HepG2 (cell line): ENCODE measurements at regions of chr4 and their contacts with region 1.

Region 1: DNA sequence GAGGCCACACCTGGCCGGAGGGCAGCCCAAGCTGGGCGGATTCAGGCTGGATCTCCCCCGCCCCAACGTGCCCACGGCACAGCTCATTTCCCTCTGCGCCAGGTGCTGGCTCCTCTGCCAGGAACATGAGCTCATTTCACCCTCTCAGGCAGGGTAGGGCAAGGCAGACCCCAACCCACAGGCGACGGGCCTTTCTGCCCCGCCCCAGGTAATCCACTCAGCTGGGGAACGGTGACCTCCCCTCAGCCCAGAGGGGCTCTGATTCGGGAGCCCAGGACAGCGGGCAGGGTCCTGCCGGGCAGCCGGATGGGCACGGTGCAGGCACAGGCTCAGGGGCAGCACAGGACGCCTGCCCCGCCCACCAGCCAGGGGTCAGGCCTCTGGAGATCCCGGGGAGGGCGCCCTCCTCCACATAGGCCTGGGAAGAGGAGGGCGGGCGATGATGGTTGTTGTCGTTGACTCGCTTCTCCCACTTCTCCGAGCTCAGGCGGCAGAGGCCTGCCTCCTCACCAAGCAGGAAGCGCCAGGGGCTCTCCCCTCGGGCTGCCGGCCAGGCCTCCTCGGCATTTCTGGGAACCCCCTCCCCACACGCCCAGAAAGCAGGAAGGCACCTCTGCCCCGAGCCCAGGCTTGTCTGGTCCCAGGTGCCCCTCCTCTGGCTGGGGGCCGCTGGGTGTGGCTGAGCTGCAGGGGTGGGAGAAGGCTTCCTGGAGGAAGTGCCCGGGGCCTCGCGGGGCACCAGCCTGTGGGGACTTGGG is 31.1 kb downstream of the TACC3 start:
- DNase-seq: peak; percentile 69
- ATAC-seq: peak; percentile 60
- H3K4me3 ChIP-seq: peak overlapping the region; percentile 45 to 73 (median 56)
- H3K27ac ChIP-seq: peak overlapping the region; percentile 12
- H3K4me1 ChIP-seq: peaks cover 90% of the 10 kb centered on the region
- H3K27me3 ChIP-seq: no peaks in the 10 kb centered on the region; a peak in 1 of 5 replicates
- CTCF ChIP-seq: peak; percentile 68
- EP300 ChIP-seq: no peak
- POLR2A ChIP-seq: no peak
- RAD21 ChIP-seq: no peak

Region 2: GRCh38 chr4:705278-706082 is 1047.0 kb before region 1 on chr4 and contains the start of gene PCGF3:
- CTCF ChIA-PET with region 1: no interaction called
- POLR2A ChIA-PET with region 1: no interaction called
- in situ Hi-C with region 1: no loop called
- intact Hi-C with region 1: no loop called
- DNase-seq: peak; percentile 83
- ATAC-seq: peak; percentile 89
- H3K4me3 ChIP-seq: peak within 1 kb of the TSS; percentile 89 to 93 (median 92)
- H3K27ac ChIP-seq: peak within 1 kb of the TSS; percentile 75
- H3K4me1 ChIP-seq: peaks cover 58% of the 10 kb centered on the region
- H3K27me3 ChIP-seq: peaks cover 3 to 12% of the 10 kb centered on the region in 2 experiments; a peak in 2 of 5 replicates
- CTCF ChIP-seq: peak; percentile 7; the same call in 1 of the 2 replicates
- EP300 ChIP-seq: no peak
- POLR2A ChIP-seq: peak in 1 of 2 experiments; percentile 34; a peak in 1 of 4 replicates
- RAD21 ChIP-seq: peak; percentile 19; the same call in 1 of the 2 replicates
- total RNA-seq, gene PCGF3: 24.2 and 28.6 TPM in 2 replicates

Region 3: DNA sequence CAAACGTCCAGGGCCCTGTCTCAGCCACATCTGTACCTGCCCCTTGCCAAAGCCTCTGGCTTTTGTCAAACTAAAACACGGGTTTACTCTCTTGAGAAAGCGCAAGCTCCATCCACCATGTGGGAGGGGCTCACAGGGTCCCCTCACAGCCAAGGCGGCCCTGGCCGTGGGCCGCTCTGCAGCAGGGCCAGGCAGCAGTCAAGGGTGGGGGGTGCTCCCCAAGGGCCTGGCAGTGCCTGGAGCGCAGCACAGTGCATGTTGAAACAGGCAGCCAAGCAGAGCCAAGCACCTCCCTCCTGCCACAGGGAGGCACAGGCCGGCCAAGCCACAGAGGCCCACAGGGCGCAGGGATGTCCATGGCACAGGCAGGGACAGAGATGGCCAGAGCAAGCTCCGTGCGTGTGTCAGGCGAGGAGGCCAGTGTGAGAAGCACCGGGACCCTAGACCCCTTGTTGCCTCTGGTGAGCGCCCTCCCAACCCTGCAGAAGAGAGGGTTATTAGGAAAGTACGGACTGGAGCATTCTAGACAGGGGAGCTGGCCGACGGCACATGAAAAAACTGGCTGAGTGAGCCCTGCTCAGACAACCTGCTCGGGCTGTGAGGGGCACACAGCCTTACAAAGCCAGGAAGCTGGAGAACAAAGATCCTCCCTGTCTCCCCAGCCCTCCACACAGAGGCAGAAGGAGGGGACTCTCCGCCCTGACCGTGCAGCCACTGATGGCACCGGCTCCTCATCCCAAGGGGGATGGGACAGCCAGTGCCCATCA is 107.4 kb before region 1 on chr4:
- CTCF ChIA-PET with region 1: no interaction called
- POLR2A ChIA-PET with region 1: no interaction called
- in situ Hi-C with region 1: no loop called
- intact Hi-C with region 1: no loop called
- DNase-seq: no peak
- ATAC-seq: peak; percentile 69
- H3K4me3 ChIP-seq: peak overlapping the region in 1 of 3 experiments; percentile 34; a peak in 1 of 6 replicates
- H3K27ac ChIP-seq: no peak overlapping the region
- H3K4me1 ChIP-seq: no peaks in the 10 kb centered on the region
- H3K27me3 ChIP-seq: peaks cover 0 to 5% of the 10 kb centered on the region in 2 experiments; a peak in 2 of 5 replicates
- CTCF ChIP-seq: no peak
- EP300 ChIP-seq: no peak
- POLR2A ChIP-seq: no peak
- RAD21 ChIP-seq: no peak

Region 4: GRCh38 chr4:1655081-1655480 is 97.4 kb before region 1 on chr4:
- CTCF ChIA-PET with region 1: no interaction called
- POLR2A ChIA-PET with region 1: no interaction called
- in situ Hi-C with region 1: no loop called
- intact Hi-C with region 1: no loop called
- DNase-seq: no peak
- ATAC-seq: no peak
- H3K4me3 ChIP-seq: no peak overlapping the region
- H3K27ac ChIP-seq: no peak overlapping the region
- H3K4me1 ChIP-seq: no peaks in the 10 kb centered on the region
- H3K27me3 ChIP-seq: no peaks in the 10 kb centered on the region
- CTCF ChIP-seq: no peak
- EP300 ChIP-seq: no peak
- POLR2A ChIP-seq: no peak
- RAD21 ChIP-seq: no peak

Region 5: GRCh38 chr4:1695913-1696312 is 56.5 kb before region 1 on chr4:
- CTCF ChIA-PET with region 1: no interaction called
- POLR2A ChIA-PET with region 1: no interaction called
- in situ Hi-C with region 1: no loop called
- intact Hi-C with region 1: no loop called
- DNase-seq: no peak
- ATAC-seq: no peak
- H3K4me3 ChIP-seq: no peak overlapping the region
- H3K27ac ChIP-seq: no peak overlapping the region
- H3K4me1 ChIP-seq: no peaks in the 10 kb centered on the region
- H3K27me3 ChIP-seq: no peaks in the 10 kb centered on the region
- CTCF ChIP-seq: no peak
- EP300 ChIP-seq: no peak
- POLR2A ChIP-seq: no peak
- RAD21 ChIP-seq: no peak

Region 6: DNA sequence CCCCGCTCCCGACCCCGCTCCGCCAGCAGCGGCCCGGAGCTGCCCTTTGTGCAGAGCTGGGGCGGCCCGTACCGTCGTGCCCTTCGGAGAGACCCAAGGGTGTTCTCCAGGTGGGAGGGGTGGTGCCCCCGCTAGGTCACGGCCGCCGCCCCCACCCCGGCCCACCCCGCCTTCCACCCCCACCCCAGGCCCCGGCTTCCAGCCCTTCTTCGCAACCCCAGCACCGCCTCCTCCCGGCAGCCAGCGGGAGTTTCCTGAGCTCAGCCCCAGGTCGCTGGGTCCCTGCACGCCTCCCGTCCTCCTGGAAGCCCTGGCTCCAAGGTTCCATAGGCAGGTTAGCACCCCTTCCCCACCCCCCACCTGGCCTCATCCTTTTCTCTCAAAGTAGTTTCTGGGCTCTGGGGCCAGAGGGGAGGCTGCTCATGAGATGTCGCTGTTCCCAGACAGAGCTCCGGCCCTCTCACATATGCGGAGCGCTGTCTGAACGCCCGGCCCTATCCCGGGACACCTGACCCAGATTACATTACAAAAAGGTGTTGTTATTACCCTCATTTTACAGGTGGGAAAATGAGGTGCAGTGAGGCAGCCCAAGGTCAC is 15.4 kb after region 1 on chr4:
- CTCF ChIA-PET with region 1: interaction called, 6 read pairs
- POLR2A ChIA-PET with region 1: interaction called, 70 read pairs
- in situ Hi-C with region 1: no loop called
- intact Hi-C with region 1: loop called (anchors 2 kb)
- DNase-seq: peak; percentile 76
- ATAC-seq: peak; percentile 20
- H3K4me3 ChIP-seq: peak overlapping the region; percentile 51 to 67 (median 59)
- H3K27ac ChIP-seq: peak overlapping the region; percentile 83
- H3K4me1 ChIP-seq: peaks cover 83% of the 10 kb centered on the region
- H3K27me3 ChIP-seq: no peaks in the 10 kb centered on the region
- CTCF ChIP-seq: peak; percentile 71
- EP300 ChIP-seq: no peak
- POLR2A ChIP-seq: no peak
- RAD21 ChIP-seq: no peak; the same call in 1 of the 2 replicates

Region 7: DNA sequence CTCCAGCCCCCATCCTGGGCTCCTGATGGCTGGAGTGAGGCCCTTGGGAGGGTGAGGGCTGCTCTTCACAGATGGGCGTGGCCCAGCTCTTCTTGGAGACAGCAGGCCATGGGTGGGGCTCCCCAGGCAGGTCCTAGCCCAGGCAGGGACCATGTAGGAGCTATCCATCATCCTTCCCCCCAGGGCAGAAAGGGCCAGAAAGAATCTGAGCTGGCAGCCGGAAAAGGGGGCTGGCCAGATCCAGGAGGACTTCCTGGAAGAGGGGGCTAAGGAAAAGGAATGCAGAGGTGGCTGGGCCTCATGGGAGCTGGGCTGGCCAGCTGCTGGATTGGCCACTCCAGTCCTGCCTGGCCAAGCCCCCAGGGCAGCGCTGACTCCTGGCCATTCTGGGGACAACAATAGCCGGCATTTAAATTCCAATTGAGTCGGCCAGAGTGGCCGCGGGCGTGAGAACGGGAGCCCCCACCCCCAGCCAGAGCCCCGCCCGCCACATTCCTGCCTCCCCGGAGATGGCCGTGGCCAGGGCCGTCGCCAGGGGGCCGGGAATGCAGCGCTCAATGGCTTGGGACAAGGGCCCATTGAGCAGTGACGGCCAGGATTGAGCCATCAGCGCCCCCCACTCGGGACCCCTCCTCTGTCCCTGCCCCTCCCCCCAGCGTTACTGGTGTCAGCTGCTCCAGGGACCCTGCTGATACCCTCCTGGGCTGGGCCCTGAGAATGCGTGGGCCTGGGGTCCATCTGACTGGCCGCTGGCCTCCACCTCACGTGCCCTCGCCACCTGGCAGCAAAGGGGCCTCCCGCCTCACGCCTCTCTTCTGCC is 25.6 kb after region 1 on chr4:
- CTCF ChIA-PET with region 1: no interaction called
- POLR2A ChIA-PET with region 1: interaction called, 1,258 read pairs
- in situ Hi-C with region 1: no loop called
- intact Hi-C with region 1: loop called (anchors 2 kb)
- DNase-seq: peak; percentile 81
- ATAC-seq: peak; percentile 39
- H3K4me3 ChIP-seq: peak overlapping the region; percentile 36 to 67 (median 44); a peak in 5 of 6 replicates
- H3K27ac ChIP-seq: peak overlapping the region; percentile 86
- H3K4me1 ChIP-seq: peaks cover 97% of the 10 kb centered on the region
- H3K27me3 ChIP-seq: no peaks in the 10 kb centered on the region
- CTCF ChIP-seq: peak; percentile 67
- EP300 ChIP-seq: peak in 1 of 2 experiments; percentile 35; a peak in 1 of 4 replicates
- POLR2A ChIP-seq: no peak
- RAD21 ChIP-seq: no peak

Region 8: GRCh38 chr4:1784789-1785591 is 32.5 kb after region 1 on chr4:
- CTCF ChIA-PET with region 1: no interaction called
- POLR2A ChIA-PET with region 1: interaction called, 1,258 read pairs
- in situ Hi-C with region 1: no loop called
- intact Hi-C with region 1: no loop called
- DNase-seq: peak; percentile 79
- ATAC-seq: peak; percentile 76
- H3K4me3 ChIP-seq: peak overlapping the region; percentile 29 to 62 (median 29); a peak in 5 of 6 replicates
- H3K27ac ChIP-seq: peak overlapping the region; percentile 69
- H3K4me1 ChIP-seq: peaks cover 96% of the 10 kb centered on the region
- H3K27me3 ChIP-seq: peaks cover 2% of the 10 kb centered on the region in 2 experiments; a peak in 3 of 5 replicates
- CTCF ChIP-seq: no peak
- EP300 ChIP-seq: peak in 1 of 2 experiments; percentile 85; a peak in 1 of 4 replicates
- POLR2A ChIP-seq: no peak
- RAD21 ChIP-seq: no peak

Region 9: DNA sequence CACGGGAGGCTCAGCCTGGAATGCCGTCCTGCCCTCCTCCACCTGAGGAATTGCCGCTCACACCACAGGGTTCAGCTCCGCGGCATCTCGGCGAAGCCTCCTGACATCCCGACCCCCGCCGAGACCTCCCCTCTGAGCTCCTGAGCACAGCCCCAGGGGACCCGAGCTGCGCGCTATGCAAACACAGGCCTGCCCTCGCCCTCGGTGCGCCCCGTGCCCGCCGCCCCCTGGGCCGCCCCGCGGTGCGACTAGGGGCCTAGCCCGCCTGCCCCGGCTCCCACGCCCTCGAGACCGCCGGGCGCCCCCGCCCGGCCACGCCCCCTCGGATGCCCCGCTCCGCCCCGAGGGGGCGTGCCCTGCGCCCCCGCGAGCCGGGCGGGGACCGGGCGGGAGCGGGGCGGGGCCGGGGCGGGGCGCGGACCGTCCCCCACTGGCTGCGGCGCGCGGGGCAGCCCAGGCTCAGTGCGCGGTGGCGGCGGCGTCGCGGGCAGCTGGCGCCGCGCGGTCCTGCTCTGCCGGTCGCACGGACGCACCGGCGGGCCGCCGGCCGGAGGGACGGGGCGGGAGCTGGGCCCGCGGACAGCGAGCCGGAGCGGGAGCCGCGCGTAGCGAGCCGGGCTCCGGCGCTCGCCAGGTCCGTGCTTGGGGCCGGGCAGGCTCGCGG is 40.5 kb after region 1 on chr4 and contains the start of gene FGFR3:
- CTCF ChIA-PET with region 1: no interaction called
- POLR2A ChIA-PET with region 1: interaction called, 1,258 read pairs
- in situ Hi-C with region 1: no loop called
- intact Hi-C with region 1: loop called (anchors 5 kb)
- DNase-seq: peak; percentile 48
- ATAC-seq: peak; percentile 31
- H3K4me3 ChIP-seq: peak within 1 kb of the TSS; percentile 94 to 98 (median 95)
- H3K27ac ChIP-seq: peak within 1 kb of the TSS; percentile 92
- H3K4me1 ChIP-seq: peaks cover 71% of the 10 kb centered on the region
- H3K27me3 ChIP-seq: peaks cover 8 to 22% of the 10 kb centered on the region in 2 experiments; a peak in 4 of 5 replicates
- CTCF ChIP-seq: no peak
- EP300 ChIP-seq: no peak
- POLR2A ChIP-seq: peak in 1 of 2 experiments; percentile 82; a peak in 2 of 4 replicates
- RAD21 ChIP-seq: peak; percentile 30; the same call in 1 of the 2 replicates
- total RNA-seq, gene FGFR3: 40.2 and 103 TPM in 2 replicates

Region 10: GRCh38 chr4:1802151-1802715 is 49.8 kb after region 1 on chr4:
- CTCF ChIA-PET with region 1: no interaction called
- POLR2A ChIA-PET with region 1: interaction called, 1,258 read pairs
- in situ Hi-C with region 1: loop called (anchors 10 kb)
- intact Hi-C with region 1: loop called (anchors 5 kb)
- DNase-seq: peak; percentile 93
- ATAC-seq: peak; percentile 73
- H3K4me3 ChIP-seq: no peak overlapping the region; a peak in 1 of 6 replicates
- H3K27ac ChIP-seq: peak overlapping the region; percentile 92
- H3K4me1 ChIP-seq: peaks cover 59% of the 10 kb centered on the region
- H3K27me3 ChIP-seq: no peaks in the 10 kb centered on the region
- CTCF ChIP-seq: peak; percentile 46
- EP300 ChIP-seq: peak in 1 of 2 experiments; percentile 86; a peak in 3 of 4 replicates
- POLR2A ChIP-seq: no peak
- RAD21 ChIP-seq: peak; percentile 40; the same call in 1 of the 2 replicates